ENCODE measurements at regions of chr3 and their contacts with region 1.

Region 1: GRCh38 chr3:195442573-195443390 is at the start of gene ACAP2:
- DNase-seq: peak; percentile 100
- H3K4me3 ChIP-seq: peak within 1 kb of the TSS; percentile 88 to 98 (median 92)
- H3K27ac ChIP-seq: peak within 1 kb of the TSS; percentile 94 to 99 (median 98)
- H3K4me1 ChIP-seq: peaks cover 23 to 43% (median 36%) of the 10 kb centered on the region in 4 donors
- H3K27me3 ChIP-seq: no peaks in the 10 kb centered on the region
- CTCF ChIP-seq: no peak
- EP300 ChIP-seq: no peak
- POLR2A ChIP-seq: peak; percentile 94
- total RNA-seq, gene ACAP2: 31.8 to 85.8 (median 43.9) TPM

Region 2: GRCh38 chr3:195271116-195271858 is 171.5 kb before region 1 on chr3 and contains the start of gene XXYLT1:
- intact Hi-C with region 1: loop called (anchors 5 kb)
- DNase-seq: peak; percentile 95
- H3K4me3 ChIP-seq: peak within 1 kb of the TSS; percentile 70 to 90 (median 84)
- H3K27ac ChIP-seq: peak within 1 kb of the TSS; percentile 85 to 90 (median 86)
- H3K4me1 ChIP-seq: peaks cover 21 to 30% (median 27%) of the 10 kb centered on the region in 4 donors
- H3K27me3 ChIP-seq: no peaks in the 10 kb centered on the region
- CTCF ChIP-seq: peak; percentile 89 to 95 (median 95)
- EP300 ChIP-seq: no peak
- POLR2A ChIP-seq: no peak
- total RNA-seq, gene XXYLT1: 8.8 to 18.5 (median 13.9) TPM

Region 3: GRCh38 chr3:195522254-195523023 is 79.7 kb after region 1 on chr3:
- intact Hi-C with region 1: loop called (anchors 5 kb)
- DNase-seq: no peak
- H3K4me3 ChIP-seq: no peak overlapping the region
- H3K27ac ChIP-seq: no peak overlapping the region
- H3K4me1 ChIP-seq: peaks cover 0 to 3% (median 0%) of the 10 kb centered on the region in 4 donors
- H3K27me3 ChIP-seq: no peaks in the 10 kb centered on the region
- CTCF ChIP-seq: peak; percentile 69 to 84 (median 76)
- EP300 ChIP-seq: no peak
- POLR2A ChIP-seq: no peak

Region 4: DNA sequence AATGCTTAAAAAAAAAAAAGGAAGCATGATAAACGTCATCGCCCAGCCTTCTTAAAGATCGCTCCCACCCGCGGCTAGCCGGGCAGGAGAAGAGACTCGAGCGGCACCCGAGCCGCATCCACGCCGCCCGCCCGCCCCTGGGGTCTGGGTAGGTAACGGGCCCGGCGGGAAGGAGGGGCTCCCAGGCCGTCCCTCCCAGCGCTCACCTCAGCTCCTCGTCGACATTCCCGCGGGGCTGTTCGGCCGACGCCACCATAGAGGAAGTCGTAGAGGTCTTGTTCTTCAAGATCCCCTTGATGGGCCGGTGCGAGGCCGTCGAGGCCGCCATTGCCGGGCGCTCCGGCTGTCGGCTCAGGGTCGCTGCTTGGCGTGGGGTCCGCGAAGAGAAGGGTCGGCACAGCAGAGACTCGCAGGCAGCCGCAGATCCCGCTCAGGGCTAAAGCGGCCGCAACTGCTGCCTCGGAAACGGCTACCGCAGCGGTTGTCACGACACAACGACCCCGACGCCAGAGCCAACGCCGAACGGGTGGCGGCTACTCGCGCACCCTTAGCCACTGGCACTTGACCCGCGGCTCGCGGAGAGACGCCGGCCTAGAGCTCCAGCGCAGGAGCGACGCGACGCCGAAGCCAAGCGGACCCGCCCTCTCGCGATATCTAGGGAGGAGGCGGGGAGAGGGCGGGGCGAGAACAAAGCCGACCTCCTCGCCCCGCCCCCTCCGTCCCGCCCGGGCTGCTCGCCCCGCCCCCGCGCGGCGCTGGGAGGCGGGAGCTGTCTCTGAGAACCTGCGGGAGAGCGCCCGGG is 100.1 kb after region 1 on chr3 and contains the start of gene PPP1R2:
- intact Hi-C with region 1: loop called (anchors 5 kb)
- DNase-seq: peak; percentile 97
- H3K4me3 ChIP-seq: peak within 1 kb of the TSS; percentile 77 to 86 (median 82)
- H3K27ac ChIP-seq: peak within 1 kb of the TSS; percentile 90 to 96 (median 94)
- H3K4me1 ChIP-seq: peaks cover 34 to 77% (median 76%) of the 10 kb centered on the region in 4 donors
- H3K27me3 ChIP-seq: no peaks in the 10 kb centered on the region
- CTCF ChIP-seq: no peak
- EP300 ChIP-seq: no peak
- POLR2A ChIP-seq: peak; percentile 91
- total RNA-seq, gene PPP1R2: 67.6 to 134 (median 86.7) TPM

Measured in esophagus muscularis mucosa (tissue), 4 donors.